ENCODE measurements at regions of chr5 and their contacts with region 1.

Region 1: GRCh38 chr5:151051066-151051930 is 29.5 kb downstream of the TNIP1 start:
- DNase-seq: no peak
- H3K4me3 ChIP-seq: no peak overlapping the region
- H3K27me3 ChIP-seq: no peaks in the 10 kb centered on the region
- CTCF ChIP-seq: peak; percentile 84

Region 2: DNA sequence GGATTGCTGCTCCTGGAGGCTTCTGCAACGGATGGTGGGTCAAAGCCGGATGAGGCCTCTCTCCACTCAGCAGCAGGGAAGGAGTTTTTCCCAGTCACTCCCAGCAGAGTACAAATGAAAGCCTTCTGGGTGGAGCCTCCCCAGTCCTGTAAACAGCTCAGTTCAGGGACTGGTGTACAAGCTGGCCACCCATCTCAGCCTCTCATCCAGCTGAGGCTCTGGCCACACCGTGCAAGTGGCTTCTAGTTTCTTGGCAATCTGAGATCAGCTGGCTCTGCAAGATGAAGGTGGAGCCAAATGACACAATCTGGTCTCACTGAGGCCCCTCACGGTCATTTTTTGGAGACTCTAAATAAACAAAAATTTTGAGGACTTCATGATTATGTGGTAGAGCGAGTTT is 20.9 kb before region 1 on chr5:
- CTCF ChIA-PET with region 1: interaction called, 18 read pairs
- POLR2A ChIA-PET with region 1: no interaction called
- DNase-seq: no peak
- H3K4me3 ChIP-seq: no peak overlapping the region
- H3K27me3 ChIP-seq: no peaks in the 10 kb centered on the region
- CTCF ChIP-seq: no peak

Region 3: DNA sequence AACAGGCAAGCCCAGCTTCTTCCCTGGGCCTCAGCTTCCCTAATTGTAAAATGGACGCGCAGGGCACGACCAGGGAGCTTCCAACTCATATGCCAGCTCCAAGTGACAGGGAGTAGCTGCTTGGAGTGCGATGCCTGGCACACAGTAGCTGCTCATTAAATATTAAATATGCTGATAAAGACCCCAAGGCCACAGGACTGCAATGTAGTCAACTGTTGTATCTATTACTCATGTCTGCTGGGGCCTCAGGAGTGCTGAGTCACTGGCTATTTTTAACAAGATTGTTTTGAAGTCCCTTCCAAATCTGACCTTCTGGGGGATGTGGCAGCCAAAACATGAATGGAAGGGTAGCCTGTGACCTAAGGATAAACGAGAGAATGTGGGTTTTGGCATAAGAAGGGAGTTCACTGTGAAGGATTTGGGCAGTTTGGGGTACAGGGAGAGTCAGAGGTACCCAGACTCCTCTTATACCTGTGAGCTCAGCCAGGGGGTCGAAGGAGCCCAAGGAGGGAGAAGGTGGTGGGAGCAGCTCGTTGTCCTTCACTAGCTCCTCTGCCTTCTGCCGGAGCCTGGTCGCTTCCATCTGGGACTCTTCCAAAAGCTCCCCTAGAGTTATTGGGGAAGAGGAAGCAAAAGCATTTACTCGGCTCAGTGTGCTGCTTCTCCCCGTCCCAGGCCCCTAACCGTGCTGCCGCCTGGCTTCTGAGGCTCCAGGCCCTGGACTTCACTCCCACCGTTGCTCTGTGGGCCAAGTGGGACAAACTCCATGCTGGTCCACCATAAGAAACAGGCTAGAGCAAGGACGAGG is 12.0 kb after region 1 on chr5:
- CTCF ChIA-PET with region 1: interaction called, 37 read pairs
- POLR2A ChIA-PET with region 1: no interaction called
- DNase-seq: peak; percentile 58
- H3K4me3 ChIP-seq: no peak overlapping the region
- H3K27me3 ChIP-seq: no peaks in the 10 kb centered on the region
- CTCF ChIP-seq: no peak

Region 4: GRCh38 chr5:151093476-151093889 is 42.2 kb after region 1 on chr5:
- CTCF ChIA-PET with region 1: interaction called, 19 read pairs
- POLR2A ChIA-PET with region 1: no interaction called
- DNase-seq: peak; percentile 93
- H3K4me3 ChIP-seq: no peak overlapping the region
- H3K27me3 ChIP-seq: no peaks in the 10 kb centered on the region
- CTCF ChIP-seq: peak; percentile 48

Region 5: GRCh38 chr5:151150471-151151262 is 99.4 kb after region 1 on chr5:
- CTCF ChIA-PET with region 1: interaction called, 13 read pairs
- POLR2A ChIA-PET with region 1: no interaction called
- DNase-seq: no peak
- H3K4me3 ChIP-seq: no peak overlapping the region
- H3K27me3 ChIP-seq: no peaks in the 10 kb centered on the region
- CTCF ChIP-seq: no peak

Region 6: GRCh38 chr5:151328734-151329133 is 277.4 kb after region 1 on chr5:
- CTCF ChIA-PET with region 1: no interaction called
- POLR2A ChIA-PET with region 1: no interaction called
- DNase-seq: no peak
- H3K4me3 ChIP-seq: no peak overlapping the region
- H3K27me3 ChIP-seq: no peaks in the 10 kb centered on the region
- CTCF ChIP-seq: no peak